ENCODE measurements at regions of chr3 and their contacts with region 1.

Region 1: GRCh38 chr3:15629860-15630597 is 28.5 kb downstream of the BTD start:
- DNase-seq: no peak
- ATAC-seq: peak; percentile 93 to 95
- H3K4me3 ChIP-seq: peak overlapping the region; percentile 36
- H3K27ac ChIP-seq: no peak overlapping the region
- H3K4me1 ChIP-seq: peaks cover 2% of the 10 kb centered on the region
- H3K27me3 ChIP-seq: no peaks in the 10 kb centered on the region

Region 2: DNA sequence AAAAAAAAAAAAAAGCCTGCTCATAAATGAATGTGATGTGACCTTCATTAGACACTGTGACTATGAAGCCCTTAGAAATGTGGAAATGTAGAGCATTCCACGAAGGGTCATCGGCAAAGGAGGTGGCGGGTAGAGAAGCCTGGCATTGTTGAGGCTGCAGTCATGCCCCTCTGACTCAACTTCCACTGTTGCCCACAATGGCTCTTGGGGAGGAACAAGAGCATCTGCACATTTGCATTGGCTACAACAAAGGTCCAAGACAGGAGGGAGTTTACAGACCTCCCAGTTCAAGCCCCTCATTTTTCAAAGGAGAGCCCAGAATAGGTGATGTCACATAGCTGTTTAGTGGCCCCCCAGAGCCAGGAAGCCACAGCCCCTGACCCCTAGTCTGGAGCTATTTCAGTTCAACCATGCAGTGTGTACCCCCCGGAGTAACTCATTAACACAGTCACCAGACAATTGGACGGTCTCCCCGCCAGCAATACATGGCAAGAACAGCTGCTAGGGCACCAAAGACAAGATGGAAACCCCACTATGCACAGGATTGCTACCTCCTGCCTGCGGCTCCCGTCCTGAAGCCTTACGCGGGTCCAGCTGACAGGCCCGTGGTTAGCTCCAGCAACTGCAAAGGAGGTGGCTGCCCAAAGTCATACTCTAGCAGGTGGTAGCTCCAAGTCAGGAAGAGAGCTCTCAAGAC is 353.9 kb before region 1 on chr3:
- intact Hi-C with region 1: no loop called
- DNase-seq: no peak
- ATAC-seq: no peak
- H3K4me3 ChIP-seq: no peak overlapping the region
- H3K27ac ChIP-seq: no peak overlapping the region
- H3K4me1 ChIP-seq: no peaks in the 10 kb centered on the region
- H3K27me3 ChIP-seq: no peaks in the 10 kb centered on the region

Region 3: DNA sequence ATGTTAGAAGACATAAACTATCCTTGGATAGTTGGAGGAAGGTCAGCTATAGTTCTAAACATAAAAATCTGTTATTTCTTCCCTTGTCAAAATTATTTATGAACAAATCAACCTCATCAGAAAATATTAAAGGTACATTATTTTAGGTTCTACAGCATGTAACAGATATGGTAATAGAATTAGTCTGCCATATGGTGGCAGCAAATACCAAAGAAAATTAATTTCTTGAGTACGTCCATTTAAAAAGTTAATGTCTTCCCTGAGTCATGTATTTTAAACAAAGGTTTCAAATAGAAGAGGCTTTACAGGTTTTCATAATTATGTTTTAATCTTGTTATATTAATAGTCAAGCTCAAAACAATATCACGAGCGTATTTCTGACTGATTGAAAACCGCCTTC is 185.7 kb after region 1 on chr3:
- intact Hi-C with region 1: loop called (anchors 5 kb)
- DNase-seq: no peak
- ATAC-seq: no peak
- H3K4me3 ChIP-seq: no peak overlapping the region
- H3K27ac ChIP-seq: no peak overlapping the region
- H3K4me1 ChIP-seq: no peaks in the 10 kb centered on the region
- H3K27me3 ChIP-seq: no peaks in the 10 kb centered on the region